PC-3 (cell line): ENCODE measurements at regions of chr6 and their contacts with region 1.

Region 1: DNA sequence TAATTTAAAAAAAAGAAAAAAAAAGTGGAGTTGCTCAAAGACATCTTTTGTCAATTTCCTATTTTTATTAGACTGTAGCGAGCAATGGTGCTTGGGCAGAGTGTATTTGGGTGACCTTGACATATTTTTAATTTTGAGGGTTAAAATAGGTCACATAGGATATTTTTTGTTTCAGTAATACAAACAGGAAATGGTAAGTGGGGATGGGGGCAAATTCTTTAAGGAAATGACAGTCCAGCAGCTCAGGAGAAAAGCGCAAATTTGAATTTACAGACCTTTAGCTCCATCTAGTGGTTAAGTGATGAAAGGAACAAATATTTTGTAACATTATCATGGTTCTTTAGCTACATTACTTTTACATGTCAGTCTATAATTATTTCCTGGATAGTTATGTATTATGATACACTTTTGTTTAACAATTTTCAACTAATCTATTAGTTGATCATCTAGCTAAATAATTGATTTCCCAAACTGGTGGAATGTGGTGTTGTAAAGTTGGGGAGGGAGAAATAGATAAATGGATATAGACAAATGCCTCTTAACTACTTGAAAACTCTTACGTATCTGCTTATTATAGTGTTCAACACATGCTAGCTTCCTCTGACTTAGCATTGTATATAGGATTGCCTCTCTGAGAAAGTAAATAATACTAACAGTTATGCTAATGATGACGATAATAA is 10.0 kb downstream of the CITED2 start:
- DNase-seq: peak; percentile 64
- ATAC-seq: no peak
- H3K4me3 ChIP-seq: no peak overlapping the region
- H3K27ac ChIP-seq: no peak overlapping the region
- H3K4me1 ChIP-seq: peaks cover 7% of the 10 kb centered on the region; the same call in 1 of the 2 replicates
- H3K27me3 ChIP-seq: no peaks in the 10 kb centered on the region
- CTCF ChIP-seq: peak; percentile 69

Region 2: DNA sequence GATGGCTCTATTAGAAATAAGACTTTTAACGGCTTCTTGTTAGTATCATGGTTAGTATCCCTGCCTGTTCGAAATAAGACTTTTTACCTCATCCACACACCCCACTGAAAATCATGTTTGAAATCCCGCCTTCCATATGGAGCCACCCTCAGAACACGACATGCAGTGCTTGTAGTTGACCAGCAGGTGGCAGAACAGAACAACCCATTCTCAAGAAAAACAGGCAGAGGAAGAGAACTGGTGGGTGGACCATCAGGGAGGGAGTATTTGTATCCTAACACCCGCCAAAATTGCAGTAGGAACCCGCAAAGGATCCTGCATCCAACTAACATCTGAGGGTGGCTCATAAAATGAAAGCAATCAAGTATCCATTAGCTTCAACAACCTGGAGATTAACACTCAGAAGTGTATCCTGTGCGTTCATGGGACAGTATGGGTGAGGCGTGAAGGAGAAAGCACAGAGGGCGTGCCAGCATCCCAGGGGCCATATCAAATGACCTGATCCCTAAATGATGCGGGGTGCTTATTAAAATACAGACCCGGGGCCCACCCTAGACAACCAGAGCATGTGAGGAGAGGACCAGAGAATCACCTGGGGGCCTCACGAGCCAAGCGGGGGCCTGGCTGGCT is 775.5 kb before region 1 on chr6:
- CTCF ChIA-PET with region 1: no interaction called
- POLR2A ChIA-PET with region 1: no interaction called
- intact Hi-C with region 1: loop called (anchors 5 kb)
- DNase-seq: peak; percentile 69
- ATAC-seq: peak; percentile 32
- H3K4me3 ChIP-seq: no peak overlapping the region
- H3K27ac ChIP-seq: no peak overlapping the region
- H3K4me1 ChIP-seq: peaks cover 13% of the 10 kb centered on the region
- H3K27me3 ChIP-seq: no peaks in the 10 kb centered on the region
- CTCF ChIP-seq: peak; percentile 87

Region 3: GRCh38 chr6:139219271-139219729 is 145.1 kb before region 1 on chr6:
- CTCF ChIA-PET with region 1: interaction called, 40 read pairs
- POLR2A ChIA-PET with region 1: no interaction called
- intact Hi-C with region 1: loop called (anchors 1 kb)
- DNase-seq: peak; percentile 75
- ATAC-seq: peak; percentile 100
- H3K4me3 ChIP-seq: no peak overlapping the region
- H3K27ac ChIP-seq: no peak overlapping the region
- H3K4me1 ChIP-seq: no peaks in the 10 kb centered on the region
- H3K27me3 ChIP-seq: no peaks in the 10 kb centered on the region
- CTCF ChIP-seq: peak; percentile 85

Region 4: DNA sequence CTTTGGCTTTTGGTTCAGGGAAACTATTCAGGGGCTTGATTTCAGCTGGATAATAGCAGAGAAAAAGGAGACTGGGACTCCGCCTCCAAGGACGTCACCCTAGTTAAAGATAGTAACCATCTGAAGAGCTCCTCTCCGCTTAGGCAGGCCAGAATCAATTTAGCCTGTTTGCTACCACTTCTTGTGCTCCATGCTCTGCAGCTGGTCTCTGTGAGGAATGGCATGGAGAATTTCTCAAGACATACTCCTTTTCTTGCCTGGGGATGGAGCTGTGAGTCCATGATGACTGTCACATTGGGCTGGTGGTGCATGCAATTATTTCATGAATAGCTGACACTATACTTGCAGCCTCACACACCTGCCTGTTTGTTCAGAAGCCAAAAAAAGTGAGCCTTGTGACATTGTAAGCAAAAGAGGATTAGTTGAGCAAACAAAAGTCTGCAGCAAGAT is 134.0 kb before region 1 on chr6:
- CTCF ChIA-PET with region 1: interaction called, 37 read pairs
- POLR2A ChIA-PET with region 1: no interaction called
- intact Hi-C with region 1: loop called (anchors 1 kb)
- DNase-seq: peak; percentile 42
- ATAC-seq: peak; percentile 97
- H3K4me3 ChIP-seq: no peak overlapping the region
- H3K27ac ChIP-seq: no peak overlapping the region
- H3K4me1 ChIP-seq: 0 out of 2 replicates have a peak, but pooled peaks cover 4% of the 10 kb centered on the region
- H3K27me3 ChIP-seq: no peaks in the 10 kb centered on the region
- CTCF ChIP-seq: peak; percentile 52